GM10248 (cell line): ENCODE measurements at regions of chr5 and their contacts with region 1.

Region 1: GRCh38 chr5:103224118-103224893 is 34.3 kb upstream of the MACIR start:
- DNase-seq: peak; percentile 42
- CTCF ChIP-seq: peak; percentile 86

Region 2: GRCh38 chr5:102581011-102581410 is 643.3 kb before region 1 on chr5:
- CTCF ChIA-PET with region 1: interaction called, 10 read pairs
- POLR2A ChIA-PET with region 1: no interaction called
- DNase-seq: no peak
- CTCF ChIP-seq: no peak

Region 3: GRCh38 chr5:103178167-103178566 is 46.1 kb before region 1 on chr5:
- CTCF ChIA-PET with region 1: interaction called, 10 read pairs
- POLR2A ChIA-PET with region 1: no interaction called
- DNase-seq: no peak
- CTCF ChIP-seq: no peak

Region 4: DNA sequence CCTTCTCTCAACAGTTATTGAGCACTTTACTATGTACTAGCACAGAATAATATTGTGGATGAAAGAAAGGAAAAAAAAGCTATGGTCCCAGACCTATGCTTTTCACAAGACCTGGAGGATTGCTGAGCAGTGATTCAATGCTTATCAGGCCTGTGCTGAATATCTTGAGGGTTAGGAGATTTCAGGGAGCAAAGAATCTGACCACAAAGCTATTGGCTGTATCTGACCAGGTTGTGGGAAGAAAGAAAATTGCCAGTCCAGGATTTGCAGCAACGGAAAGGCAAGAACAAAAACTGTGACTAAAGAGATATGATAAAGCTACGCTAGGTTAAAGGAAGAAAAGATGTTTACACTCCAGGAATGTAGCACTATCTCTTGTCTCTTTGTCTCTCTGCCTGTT is 19.4 kb after region 1 on chr5:
- CTCF ChIA-PET with region 1: interaction called, 10 read pairs
- POLR2A ChIA-PET with region 1: no interaction called
- DNase-seq: no peak
- CTCF ChIP-seq: no peak

Region 5: GRCh38 chr5:103475629-103476240 is 251.4 kb after region 1 on chr5:
- CTCF ChIA-PET with region 1: interaction called, 55 read pairs
- POLR2A ChIA-PET with region 1: no interaction called
- DNase-seq: peak; percentile 13
- CTCF ChIP-seq: peak; percentile 61